SK-N-SH (cell line): ENCODE measurements at regions of chr11 and their contacts with region 1.

Region 1: GRCh38 chr11:75142714-75143419 is 8.0 kb upstream of the SLCO2B1 start:
- DNase-seq: peak; percentile 63
- H3K4me3 ChIP-seq: no peak overlapping the region
- H3K27ac ChIP-seq: peak overlapping the region; percentile 60 to 61; a peak in 3 of 4 replicates
- H3K4me1 ChIP-seq: peaks cover 10 to 21% of the 10 kb centered on the region in 2 experiments; a peak in 2 of 4 replicates
- H3K27me3 ChIP-seq: no peaks in the 10 kb centered on the region; the same call in 1 of the 2 replicates
- CTCF ChIP-seq: no peak
- EP300 ChIP-seq: no peak; a peak in 1 of 4 replicates
- RAD21 ChIP-seq: no peak; the same call in 1 of the 2 replicates

Region 2: DNA sequence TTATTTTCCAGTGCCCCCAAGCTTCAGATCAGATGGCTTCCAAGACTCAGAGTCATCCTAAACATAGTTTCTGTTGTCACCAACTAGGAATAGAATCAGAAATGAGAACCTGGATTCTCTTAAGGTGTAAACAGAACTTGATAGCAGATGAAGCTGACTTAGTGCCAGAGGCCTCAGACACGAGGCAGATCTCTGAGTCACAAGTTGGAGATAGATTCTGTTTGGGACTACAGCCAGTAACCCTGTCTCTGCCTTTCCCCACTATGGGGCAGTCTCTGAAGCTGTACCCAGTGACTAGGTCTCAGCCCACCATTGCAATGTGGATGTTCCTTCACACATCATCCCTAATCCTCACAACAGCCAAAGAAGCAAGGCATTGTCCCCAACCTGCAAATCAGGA is 128.7 kb before region 1 on chr11:
- CTCF ChIA-PET with region 1: interaction called, 133 read pairs
- POLR2A ChIA-PET with region 1: no interaction called
- DNase-seq: no peak
- H3K4me3 ChIP-seq: no peak overlapping the region
- H3K27ac ChIP-seq: peak overlapping the region; percentile 25 to 63; a peak in 3 of 4 replicates
- H3K4me1 ChIP-seq: peaks cover 0 to 9% of the 10 kb centered on the region in 2 experiments; a peak in 2 of 4 replicates
- H3K27me3 ChIP-seq: no peaks in the 10 kb centered on the region
- CTCF ChIP-seq: peak; percentile 45
- EP300 ChIP-seq: no peak
- RAD21 ChIP-seq: no peak

Region 3: GRCh38 chr11:75113030-75113429 is 29.8 kb before region 1 on chr11:
- CTCF ChIA-PET with region 1: interaction called, 12 read pairs
- POLR2A ChIA-PET with region 1: no interaction called
- DNase-seq: no peak
- H3K4me3 ChIP-seq: no peak overlapping the region
- H3K27ac ChIP-seq: no peak overlapping the region
- H3K4me1 ChIP-seq: no peaks in the 10 kb centered on the region
- H3K27me3 ChIP-seq: no peaks in the 10 kb centered on the region
- CTCF ChIP-seq: no peak
- EP300 ChIP-seq: no peak
- RAD21 ChIP-seq: no peak

Region 4: DNA sequence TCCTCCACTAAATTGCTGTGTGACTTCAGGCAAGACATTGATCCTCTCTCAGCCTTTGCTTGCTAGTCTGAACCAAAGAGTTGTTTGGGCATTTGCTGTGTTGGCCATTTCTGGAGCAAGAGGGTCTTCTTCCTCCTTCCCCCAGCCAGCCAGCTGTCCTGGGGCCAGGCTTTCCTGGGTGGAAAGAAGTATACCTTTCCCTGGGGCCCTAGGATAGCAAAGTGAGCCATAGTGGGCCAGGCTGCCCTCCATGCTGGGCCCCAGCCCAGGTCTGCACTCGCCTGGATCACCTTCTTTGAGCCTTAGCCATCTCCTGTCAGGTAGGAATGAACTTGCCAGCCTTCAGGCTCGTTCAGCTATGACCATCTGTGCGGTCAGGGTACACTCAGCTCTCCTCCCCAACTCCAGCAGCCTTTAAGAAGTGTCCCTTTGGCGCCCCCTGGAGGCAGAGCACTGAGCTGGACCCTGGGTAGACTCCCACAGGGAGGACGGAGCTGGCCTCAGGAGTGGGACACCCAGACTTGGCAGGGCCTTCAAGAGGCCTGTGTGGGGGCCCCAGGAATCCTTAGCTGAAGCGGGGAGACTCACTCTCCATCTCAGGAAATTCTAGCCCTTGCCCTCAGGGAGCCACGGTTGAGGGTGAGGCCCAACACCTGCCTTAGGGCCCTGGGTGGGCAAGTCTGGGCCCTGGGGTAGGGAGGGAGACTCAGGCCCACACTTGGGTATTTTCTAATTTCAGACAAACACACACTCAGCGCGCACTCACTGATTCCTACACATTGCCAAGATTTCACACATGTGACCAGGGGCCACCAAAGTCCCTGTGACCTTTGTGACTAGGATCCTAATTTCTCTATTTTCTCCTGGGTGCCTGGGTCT is 62.1 kb after region 1 on chr11:
- CTCF ChIA-PET with region 1: interaction called, 630 read pairs
- POLR2A ChIA-PET with region 1: interaction called, 9 read pairs
- DNase-seq: peak; percentile 88
- H3K4me3 ChIP-seq: no peak overlapping the region; a peak in 1 of 4 replicates
- H3K27ac ChIP-seq: no peak overlapping the region
- H3K4me1 ChIP-seq: peaks cover 0 to 9% of the 10 kb centered on the region in 2 experiments; a peak in 1 of 4 replicates
- H3K27me3 ChIP-seq: no peaks in the 10 kb centered on the region; the same call in 1 of the 2 replicates
- CTCF ChIP-seq: peak; percentile 87
- EP300 ChIP-seq: no peak
- RAD21 ChIP-seq: peak; percentile 90

Region 5: DNA sequence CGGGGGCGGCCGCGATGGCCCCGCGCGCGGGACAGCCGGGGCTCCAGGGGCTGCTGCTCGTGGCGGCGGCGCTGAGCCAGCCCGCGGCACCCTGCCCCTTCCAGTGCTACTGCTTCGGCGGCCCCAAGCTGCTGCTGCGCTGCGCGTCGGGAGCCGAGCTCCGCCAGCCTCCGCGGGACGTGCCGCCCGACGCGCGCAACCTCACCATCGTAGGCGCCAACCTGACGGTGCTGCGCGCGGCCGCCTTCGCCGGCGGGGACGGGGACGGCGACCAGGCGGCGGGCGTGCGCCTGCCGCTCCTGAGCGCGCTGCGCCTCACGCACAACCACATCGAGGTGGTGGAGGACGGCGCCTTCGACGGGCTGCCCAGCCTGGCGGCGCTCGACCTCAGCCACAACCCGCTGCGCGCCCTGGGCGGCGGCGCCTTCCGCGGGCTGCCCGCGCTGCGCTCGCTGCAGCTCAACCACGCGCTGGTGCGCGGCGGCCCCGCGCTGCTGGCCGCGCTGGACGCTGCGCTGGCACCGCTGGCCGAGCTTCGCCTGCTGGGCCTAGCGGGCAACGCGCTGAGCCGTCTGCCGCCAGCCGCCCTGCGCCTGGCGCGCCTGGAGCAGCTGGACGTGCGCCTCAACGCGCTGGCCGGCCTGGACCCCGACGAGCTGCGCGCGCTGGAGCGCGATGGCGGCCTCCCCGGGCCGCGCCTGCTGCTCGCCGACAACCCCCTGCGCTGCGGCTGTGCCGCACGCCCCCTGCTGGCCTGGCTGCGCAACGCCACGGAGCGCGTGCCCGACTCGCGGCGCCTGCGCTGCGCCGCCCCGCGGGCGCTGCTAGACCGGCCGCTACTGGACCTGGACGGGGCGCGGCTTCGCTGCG is 98.4 kb after region 1 on chr11:
- CTCF ChIA-PET with region 1: interaction called, 1,115 read pairs
- POLR2A ChIA-PET with region 1: interaction called, 9 read pairs
- DNase-seq: peak; percentile 98
- H3K4me3 ChIP-seq: peak overlapping the region; percentile 53
- H3K27ac ChIP-seq: no peak overlapping the region; a peak in 1 of 4 replicates
- H3K4me1 ChIP-seq: no peaks in the 10 kb centered on the region; a peak in 1 of 4 replicates
- H3K27me3 ChIP-seq: peaks cover 37% of the 10 kb centered on the region
- CTCF ChIP-seq: peak; percentile 60
- EP300 ChIP-seq: no peak
- RAD21 ChIP-seq: peak; percentile 71